Transverse colon (tissue), 4 donors: ENCODE measurements at regions of chr1 and their contacts with region 1.

Region 1: DNA sequence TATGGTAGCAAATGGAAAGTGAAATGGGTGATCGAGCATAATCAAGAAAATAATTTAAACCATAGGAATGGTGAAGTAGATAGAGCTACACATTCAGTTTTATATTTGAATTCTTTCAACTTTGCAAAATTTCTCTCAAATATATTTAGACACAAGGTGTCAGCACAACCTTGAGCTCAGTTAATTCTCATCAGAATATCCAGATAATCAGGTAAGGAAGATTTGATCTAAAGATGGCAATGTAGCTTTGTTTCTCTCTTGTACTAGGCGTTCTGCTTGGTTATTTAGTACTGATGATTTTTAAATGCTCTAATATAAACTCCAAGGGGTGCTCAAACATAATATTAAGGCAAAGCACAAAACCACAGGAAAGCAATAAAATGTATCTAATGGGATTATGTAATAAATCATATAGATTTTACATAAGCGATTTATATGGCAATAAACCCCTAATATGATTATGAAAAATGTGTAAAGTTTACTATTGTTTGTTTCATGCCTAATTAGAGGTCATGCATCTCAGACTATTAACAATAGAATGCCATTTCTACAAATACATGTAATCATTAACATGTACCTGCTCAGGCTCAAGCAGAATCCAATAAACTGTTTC is 32.4 kb upstream of the SERTAD4 start:
- DNase-seq: no peak
- H3K4me3 ChIP-seq: no peak overlapping the region
- H3K27ac ChIP-seq: no peak overlapping the region
- H3K4me1 ChIP-seq: no peaks in the 10 kb centered on the region
- H3K27me3 ChIP-seq: no peaks in the 10 kb centered on the region
- CTCF ChIP-seq: peak; percentile 20 to 40 (median 29)
- EP300 ChIP-seq: no peak
- POLR2A ChIP-seq: no peak

Region 2: GRCh38 chr1:210159206-210159605 is 41.0 kb before region 1 on chr1:
- in situ Hi-C with region 1: no loop called
- intact Hi-C with region 1: no loop called
- DNase-seq: no peak
- H3K4me3 ChIP-seq: no peak overlapping the region
- H3K27ac ChIP-seq: no peak overlapping the region
- H3K4me1 ChIP-seq: no peaks in the 10 kb centered on the region
- H3K27me3 ChIP-seq: no peaks in the 10 kb centered on the region
- CTCF ChIP-seq: no peak
- EP300 ChIP-seq: no peak
- POLR2A ChIP-seq: no peak

Region 3: DNA sequence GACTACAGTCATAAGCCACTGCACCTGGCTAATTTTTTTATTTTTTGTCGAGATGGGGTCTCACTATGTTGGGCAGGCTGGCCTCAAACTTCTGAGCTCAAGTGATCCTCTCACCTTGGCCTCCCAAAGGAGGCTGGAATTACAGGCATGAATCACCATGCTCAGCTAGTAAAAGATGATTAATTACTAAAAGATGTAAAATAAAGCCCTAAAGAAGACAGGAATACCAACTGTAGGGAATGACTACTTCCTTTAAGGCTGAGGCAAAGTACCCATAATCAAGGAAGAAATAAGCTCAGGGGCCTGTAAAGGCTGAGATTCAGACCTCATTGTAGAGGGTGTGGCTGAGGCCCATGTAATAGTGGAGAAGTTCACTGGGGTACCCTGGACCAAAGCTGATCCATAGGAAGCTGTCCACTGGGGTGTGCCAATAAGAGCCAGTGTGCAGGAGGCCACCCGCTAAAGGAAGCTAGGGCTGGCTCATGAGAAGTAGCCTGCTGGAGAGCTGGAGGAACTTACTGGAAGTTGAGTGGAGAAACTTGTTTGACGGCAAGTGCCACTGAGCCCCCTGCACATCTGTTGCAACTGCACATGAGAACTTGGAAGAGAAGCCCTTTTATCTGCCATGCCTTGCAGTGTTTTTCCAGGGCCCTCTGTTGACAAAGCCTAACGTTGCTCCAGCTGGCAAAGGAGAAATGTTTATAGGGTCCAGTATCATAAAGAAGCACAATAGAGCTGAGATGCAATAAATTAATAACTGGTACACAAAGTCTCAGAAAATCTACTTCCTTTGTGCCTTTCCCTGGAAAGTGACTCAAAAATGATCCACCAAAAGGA is 14.6 kb after region 1 on chr1:
- in situ Hi-C with region 1: no loop called
- intact Hi-C with region 1: loop called (anchors 1 kb)
- DNase-seq: peak; percentile 15
- H3K4me3 ChIP-seq: no peak overlapping the region
- H3K27ac ChIP-seq: peak overlapping the region in 1 of 4 donors; percentile 25
- H3K4me1 ChIP-seq: peaks cover 0 to 5% (median 2%) of the 10 kb centered on the region in 4 donors
- H3K27me3 ChIP-seq: no peaks in the 10 kb centered on the region
- CTCF ChIP-seq: peak in 1 of 5 experiments; percentile 12
- EP300 ChIP-seq: no peak
- POLR2A ChIP-seq: no peak

Region 4: GRCh38 chr1:210311726-210312493 is 111.7 kb after region 1 on chr1:
- in situ Hi-C with region 1: no loop called
- intact Hi-C with region 1: loop called (anchors 5 kb)
- DNase-seq: no peak
- H3K4me3 ChIP-seq: no peak overlapping the region
- H3K27ac ChIP-seq: peak overlapping the region in 3 of 4 donors; percentile 24 to 52 (median 38)
- H3K4me1 ChIP-seq: peaks cover 0 to 10% (median 7%) of the 10 kb centered on the region in 4 donors
- H3K27me3 ChIP-seq: no peaks in the 10 kb centered on the region
- CTCF ChIP-seq: no peak
- EP300 ChIP-seq: no peak
- POLR2A ChIP-seq: no peak